ENCODE measurements at regions of chr16 and their contacts with region 1.

Region 1: GRCh38 chr16:85717393-85718121 is 28.8 kb upstream of the GINS2 start:
- DNase-seq: peak; percentile 79
- ATAC-seq: peak; percentile 72
- H3K4me3 Mint-ChIP-seq: no peak overlapping the region
- H3K27ac Mint-ChIP-seq: no peak overlapping the region
- H3K4me1 Mint-ChIP-seq: peaks cover 3% of the 10 kb centered on the region
- H3K27me3 Mint-ChIP-seq: no peaks in the 10 kb centered on the region

Region 2: GRCh38 chr16:85393674-85394483 is 323.7 kb before region 1 on chr16:
- CTCF ChIA-PET with region 1: no interaction called
- POLR2A ChIA-PET with region 1: no interaction called
- intact Hi-C with region 1: loop called (anchors 1 to 2 kb)
- DNase-seq: peak; percentile 83
- ATAC-seq: peak; percentile 73
- H3K4me3 Mint-ChIP-seq: no peak overlapping the region
- H3K27ac Mint-ChIP-seq: no peak overlapping the region
- H3K4me1 Mint-ChIP-seq: no peaks in the 10 kb centered on the region
- H3K27me3 Mint-ChIP-seq: no peaks in the 10 kb centered on the region

Region 3: DNA sequence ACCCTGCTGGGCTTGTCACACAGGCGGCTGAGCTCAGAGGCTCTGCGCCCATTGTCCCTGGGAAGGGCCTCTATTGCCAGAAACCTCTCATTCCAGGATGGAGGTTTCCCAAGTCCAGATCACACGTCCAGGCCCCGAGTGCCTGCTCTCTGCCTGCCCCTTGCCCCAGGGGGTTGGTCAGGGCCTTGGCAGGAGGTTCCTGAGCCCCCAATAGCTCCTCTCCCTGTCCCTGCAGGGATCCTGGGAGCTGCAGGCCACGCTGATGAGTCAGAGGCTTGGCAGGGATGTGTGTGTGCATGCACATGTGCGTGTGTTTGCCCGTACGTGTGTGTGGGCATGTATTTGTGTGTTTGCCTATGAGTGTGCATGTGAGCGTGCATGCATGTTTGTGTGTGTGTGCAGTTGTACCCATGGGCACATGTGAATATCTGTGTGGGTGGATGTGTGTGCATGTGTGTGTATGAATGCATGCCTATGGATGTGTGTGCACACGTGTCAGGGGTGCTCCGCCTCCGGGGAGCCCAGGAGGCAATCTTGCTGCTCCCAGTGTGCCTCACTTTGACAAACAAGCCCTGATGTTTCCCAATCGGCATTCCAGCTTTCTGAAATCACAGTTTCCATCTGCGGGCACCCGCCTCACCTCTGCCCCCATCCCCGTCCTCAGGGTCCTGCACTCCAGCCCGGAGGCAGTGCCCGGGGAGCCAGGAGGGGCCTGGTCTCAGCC is 202.8 kb before region 1 on chr16:
- CTCF ChIA-PET with region 1: no interaction called
- POLR2A ChIA-PET with region 1: no interaction called
- intact Hi-C with region 1: no loop called
- DNase-seq: no peak
- ATAC-seq: no peak
- H3K4me3 Mint-ChIP-seq: no peak overlapping the region
- H3K27ac Mint-ChIP-seq: no peak overlapping the region
- H3K4me1 Mint-ChIP-seq: no peaks in the 10 kb centered on the region
- H3K27me3 Mint-ChIP-seq: no peaks in the 10 kb centered on the region

Region 4: GRCh38 chr16:85605051-85605911 is 112.3 kb before region 1 on chr16:
- CTCF ChIA-PET with region 1: no interaction called
- POLR2A ChIA-PET with region 1: no interaction called
- intact Hi-C with region 1: no loop called
- DNase-seq: no peak
- ATAC-seq: no peak
- H3K4me3 Mint-ChIP-seq: no peak overlapping the region
- H3K27ac Mint-ChIP-seq: no peak overlapping the region
- H3K4me1 Mint-ChIP-seq: peaks cover 10% of the 10 kb centered on the region
- H3K27me3 Mint-ChIP-seq: peaks cover 5% of the 10 kb centered on the region

Region 5: GRCh38 chr16:85615852-85616606 is 101.5 kb before region 1 on chr16:
- CTCF ChIA-PET with region 1: interaction called, 11 read pairs
- POLR2A ChIA-PET with region 1: no interaction called
- intact Hi-C with region 1: no loop called
- DNase-seq: peak; percentile 89
- ATAC-seq: peak; percentile 42
- H3K4me3 Mint-ChIP-seq: peak overlapping the region; percentile 15
- H3K27ac Mint-ChIP-seq: no peak overlapping the region
- H3K4me1 Mint-ChIP-seq: peaks cover 30% of the 10 kb centered on the region
- H3K27me3 Mint-ChIP-seq: peaks cover 10% of the 10 kb centered on the region

Region 6: GRCh38 chr16:85673529-85674417 is 43.8 kb before region 1 on chr16:
- CTCF ChIA-PET with region 1: interaction called, 4 read pairs
- POLR2A ChIA-PET with region 1: no interaction called
- intact Hi-C with region 1: loop called in 1 of 2 experiments (anchors 5 kb)
- DNase-seq: no peak
- ATAC-seq: no peak
- H3K4me3 Mint-ChIP-seq: no peak overlapping the region
- H3K27ac Mint-ChIP-seq: no peak overlapping the region
- H3K4me1 Mint-ChIP-seq: peaks cover 7% of the 10 kb centered on the region
- H3K27me3 Mint-ChIP-seq: no peaks in the 10 kb centered on the region

Measured in activated CD4-positive, alpha-beta T cell treated with anti-CD3 and anti-CD28 coated beads for 36 hours (primary cell).